Motor neuron (in vitro differentiated cells): ENCODE measurements at regions of chr7 and their contacts with region 1.

Region 1: GRCh38 chr7:131654668-131655326 is 98.4 kb upstream of the PODXL start:
- ATAC-seq: peak; percentile 88 to 100 (median 94)
- H3K4me3 ChIP-seq: no peak overlapping the region
- H3K27ac ChIP-seq: no peak overlapping the region
- H3K4me1 ChIP-seq: no peaks in the 10 kb centered on the region

Region 2: GRCh38 chr7:130912862-130913631 is 741.8 kb before region 1 on chr7:
- in situ Hi-C with region 1: no loop called
- ATAC-seq: peak in 7 of 8 experiments; percentile 27 to 74 (median 40)
- H3K4me3 ChIP-seq: no peak overlapping the region
- H3K27ac ChIP-seq: no peak overlapping the region
- H3K4me1 ChIP-seq: peaks cover 8% of the 10 kb centered on the region in 2 donors

Region 3: DNA sequence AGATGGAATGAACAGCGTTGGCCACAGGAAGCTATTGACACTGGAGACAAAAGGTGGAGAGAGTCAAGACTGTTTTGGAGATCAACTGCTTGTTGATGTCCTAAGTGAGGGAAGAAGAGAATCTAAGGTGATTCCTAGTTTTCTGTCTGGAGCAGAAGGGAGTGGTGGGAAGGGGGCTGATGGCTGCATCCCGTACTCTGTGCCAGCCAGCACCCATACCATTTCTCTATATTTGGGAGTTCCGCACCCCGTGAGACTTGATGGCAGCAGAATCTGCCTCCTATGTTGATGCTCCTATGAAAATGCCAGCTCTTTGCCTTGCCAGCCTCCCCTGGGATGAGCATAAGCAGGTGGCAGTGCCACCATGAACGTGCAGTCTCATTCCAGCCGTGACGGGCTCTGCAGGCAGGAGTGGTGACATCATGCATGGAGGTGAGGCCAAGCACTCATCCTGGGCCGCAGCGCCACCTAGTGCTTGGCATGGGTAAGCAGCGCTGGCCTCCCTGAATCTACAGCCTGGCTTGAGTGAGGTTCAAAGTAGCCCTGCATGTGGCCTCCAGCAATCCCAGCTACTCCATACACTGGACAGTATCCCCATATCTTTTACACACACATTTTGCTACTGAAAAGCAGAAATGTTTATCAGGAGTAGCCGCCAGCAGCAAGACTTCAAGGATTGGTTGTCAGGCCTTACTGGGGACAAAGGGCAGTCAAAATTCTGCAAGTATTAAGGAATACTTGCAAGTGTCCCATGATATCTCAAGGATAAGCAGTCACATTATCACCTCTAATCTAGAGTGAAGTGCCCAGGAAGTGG is 141.3 kb before region 1 on chr7:
- in situ Hi-C with region 1: loop called in 2 of 9 experiments (anchors 10 kb)
- ATAC-seq: peak; percentile 93 to 100 (median 99)
- H3K4me3 ChIP-seq: no peak overlapping the region
- H3K27ac ChIP-seq: peak overlapping the region in 1 of 2 donors; percentile 18
- H3K4me1 ChIP-seq: peaks cover 3 to 4% of the 10 kb centered on the region in 2 donors

Region 4: DNA sequence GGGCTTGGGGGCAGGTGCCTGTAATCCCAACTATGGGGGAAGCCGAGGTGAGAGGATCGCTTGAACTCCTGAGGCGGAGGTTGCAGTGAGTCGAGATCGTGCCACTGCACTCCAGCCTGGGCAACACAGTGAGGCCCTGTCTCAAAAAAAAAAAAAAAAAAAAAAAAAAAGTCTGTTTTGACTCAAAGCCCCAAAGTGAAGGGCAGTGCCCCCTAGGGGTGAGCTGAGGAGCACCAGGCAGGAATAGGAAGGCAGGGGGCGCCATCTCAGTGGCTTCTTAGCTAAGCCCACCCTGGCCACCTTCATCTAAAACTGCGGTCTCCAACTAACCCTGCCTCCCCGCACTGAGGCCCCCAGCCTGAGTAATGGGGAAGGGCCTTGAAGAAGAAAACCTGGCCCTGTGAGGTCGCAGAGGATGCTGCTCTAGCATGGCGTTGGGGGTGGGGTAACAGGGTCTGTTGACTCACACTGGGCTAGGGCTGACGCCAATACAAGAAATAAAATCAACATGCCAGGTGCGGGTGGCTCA is 108.2 kb before region 1 on chr7:
- in situ Hi-C with region 1: loop called in 2 of 9 experiments (anchors 10 to 25 kb)
- ATAC-seq: no peak
- H3K4me3 ChIP-seq: no peak overlapping the region
- H3K27ac ChIP-seq: no peak overlapping the region
- H3K4me1 ChIP-seq: peaks cover 12 to 14% of the 10 kb centered on the region in 2 donors

Region 5: DNA sequence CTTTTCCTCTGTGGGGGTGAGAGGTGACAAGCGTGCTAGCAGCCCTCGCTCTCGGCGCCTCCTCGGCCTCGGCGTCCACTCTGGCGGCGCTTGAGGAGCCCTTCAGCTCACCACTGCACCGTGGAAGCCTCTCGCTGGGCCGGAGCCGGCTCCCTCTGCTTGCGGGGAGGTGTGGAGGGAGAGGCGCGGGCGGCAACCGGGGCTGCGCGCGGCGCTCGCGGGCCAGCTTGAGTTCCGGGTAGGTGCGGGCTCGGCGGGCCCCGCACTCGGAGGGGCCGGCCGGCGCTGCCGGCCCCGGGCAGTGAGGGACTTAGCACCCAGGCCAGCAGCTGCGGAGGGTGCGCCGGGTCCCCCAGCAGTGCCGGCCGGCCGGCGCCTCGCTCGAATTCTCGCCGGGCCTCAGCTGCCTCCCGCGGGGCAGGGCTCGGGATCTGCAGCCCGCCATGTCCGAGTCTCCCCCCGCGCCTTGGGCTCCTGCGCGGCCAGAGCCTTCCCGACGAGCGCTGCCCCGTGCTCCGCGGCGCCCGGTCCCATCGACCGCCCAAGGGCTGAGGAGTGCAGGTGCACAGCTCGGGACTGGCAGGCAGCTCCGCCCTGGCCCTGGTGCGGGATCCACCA is 254.5 kb after region 1 on chr7:
- in situ Hi-C with region 1: no loop called
- ATAC-seq: peak; percentile 48 to 79 (median 66)
- H3K4me3 ChIP-seq: peak overlapping the region; percentile 12 to 32 (median 18)
- H3K27ac ChIP-seq: no peak overlapping the region
- H3K4me1 ChIP-seq: peaks cover 0 to 13% of the 10 kb centered on the region in 2 donors